Kidney (tissue), 22 donors: ENCODE measurements at regions of chr1 and their contacts with region 1.

Region 1: DNA sequence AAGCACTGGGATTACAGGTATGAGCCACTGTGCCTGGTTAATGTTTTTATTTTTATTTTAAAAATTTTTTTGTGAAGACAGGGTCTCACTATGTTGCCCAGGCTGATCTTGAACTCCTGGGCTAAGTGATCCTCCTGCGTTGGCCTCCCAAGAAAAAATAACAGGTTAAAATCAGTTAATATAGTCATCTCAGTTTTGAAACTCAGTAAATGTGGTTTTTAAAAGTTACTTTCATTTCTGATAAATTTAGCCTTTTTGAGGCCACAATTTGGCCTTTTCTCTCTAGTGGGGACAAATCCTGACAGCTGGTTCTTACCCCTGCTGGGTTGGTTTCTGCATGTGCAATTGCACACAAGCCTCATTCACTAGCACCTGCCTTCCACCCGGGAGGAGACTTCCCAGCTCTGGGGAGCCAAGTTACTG is 13.3 kb downstream of the PMF1 start:
- DNase-seq: no peak
- H3K4me3 ChIP-seq: no peak overlapping the region
- H3K27ac ChIP-seq: no peak overlapping the region
- H3K4me1 ChIP-seq: peaks cover 0 to 2% (median 0%) of the 10 kb centered on the region in 3 donors
- H3K27me3 ChIP-seq: no peaks in the 10 kb centered on the region
- CTCF ChIP-seq: no peak

Region 2: DNA sequence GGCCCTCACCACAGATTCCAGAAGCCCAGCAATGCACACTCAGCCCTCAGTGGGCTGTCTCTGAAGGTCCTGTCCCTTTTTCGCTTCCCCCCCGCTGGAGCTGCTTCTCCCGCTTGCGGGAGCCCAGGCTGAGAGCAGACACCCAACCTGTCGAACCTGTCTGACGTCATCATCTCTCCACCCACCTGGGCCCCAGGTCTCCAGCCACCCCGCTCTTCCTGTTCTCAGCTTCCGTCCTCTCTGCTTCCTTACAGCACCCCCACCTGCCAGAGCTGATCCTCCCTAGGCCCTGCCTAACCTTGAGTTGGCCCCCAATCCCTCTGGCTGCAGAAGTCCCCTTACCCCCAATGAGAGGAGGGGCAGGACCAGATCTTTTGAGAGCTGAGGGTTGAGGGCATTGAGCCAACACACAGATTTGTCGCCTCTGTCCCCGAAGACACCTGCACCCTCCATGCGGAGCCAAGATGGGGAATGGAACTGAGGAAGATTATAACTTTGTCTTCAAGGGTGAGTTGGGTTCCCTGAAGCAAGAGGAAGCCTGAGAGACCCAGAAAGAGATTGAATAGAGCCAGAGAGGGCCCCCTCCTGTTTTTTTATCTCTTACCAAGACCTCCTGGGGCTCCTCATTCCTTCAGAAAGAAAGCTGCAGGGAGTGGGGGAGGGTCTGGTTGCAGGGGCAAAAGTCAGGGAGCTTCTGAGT is 165.0 kb before region 1 on chr1 and contains the start of gene RAB25:
- intact Hi-C with region 1: no loop called
- DNase-seq: peak in 4 of 5 donors; percentile 66 to 85 (median 78)
- H3K4me3 ChIP-seq: peak within 1 kb of the TSS; percentile 59 to 75 (median 62)
- H3K27ac ChIP-seq: peak within 1 kb of the TSS; percentile 53 to 57
- H3K4me1 ChIP-seq: peaks cover 0 to 4% (median 0%) of the 10 kb centered on the region in 3 donors
- H3K27me3 ChIP-seq: no peaks in the 10 kb centered on the region
- CTCF ChIP-seq: no peak
- total RNA-seq, gene RAB25: 51.4 TPM

Region 3: DNA sequence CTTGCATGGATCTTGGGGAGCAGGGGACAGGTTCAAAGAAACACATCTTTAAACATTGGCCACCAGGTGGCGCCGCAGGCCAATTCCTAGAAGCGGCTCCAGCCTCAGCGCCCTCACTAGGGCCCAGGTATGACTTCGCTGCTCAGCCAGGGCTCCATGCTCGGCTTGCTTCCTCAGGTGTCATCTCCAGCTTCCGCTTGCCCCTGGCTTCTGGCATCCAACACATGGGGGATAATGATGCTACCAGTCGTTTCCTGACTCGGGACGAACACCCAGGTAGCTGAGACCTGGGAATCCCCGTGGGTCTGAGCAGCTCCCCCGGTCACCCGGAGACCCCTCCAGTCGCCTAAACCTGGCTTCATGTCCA is 135.3 kb before region 1 on chr1:
- intact Hi-C with region 1: loop called (anchors 5 kb)
- DNase-seq: peak; percentile 86 to 94 (median 89)
- H3K4me3 ChIP-seq: no peak overlapping the region
- H3K27ac ChIP-seq: no peak overlapping the region
- H3K4me1 ChIP-seq: peaks cover 0 to 4% (median 0%) of the 10 kb centered on the region in 3 donors
- H3K27me3 ChIP-seq: no peaks in the 10 kb centered on the region
- CTCF ChIP-seq: peak; percentile 79

Region 4: GRCh38 chr1:156126043-156126700 is 100.0 kb before region 1 on chr1:
- intact Hi-C with region 1: no loop called
- DNase-seq: peak; percentile 85 to 98 (median 88)
- H3K4me3 ChIP-seq: no peak overlapping the region
- H3K27ac ChIP-seq: peak overlapping the region; percentile 92 to 94
- H3K4me1 ChIP-seq: peaks cover 19 to 72% (median 67%) of the 10 kb centered on the region in 3 donors
- H3K27me3 ChIP-seq: no peaks in the 10 kb centered on the region
- CTCF ChIP-seq: no peak

Region 5: GRCh38 chr1:156146020-156146768 is 79.9 kb before region 1 on chr1:
- intact Hi-C with region 1: loop called (anchors 5 kb)
- DNase-seq: peak; percentile 67 to 93 (median 90)
- H3K4me3 ChIP-seq: peak overlapping the region; percentile 1 to 48 (median 42)
- H3K27ac ChIP-seq: peak overlapping the region; percentile 30 to 59
- H3K4me1 ChIP-seq: peaks cover 3 to 27% (median 17%) of the 10 kb centered on the region in 3 donors
- H3K27me3 ChIP-seq: no peaks in the 10 kb centered on the region
- CTCF ChIP-seq: peak; percentile 77